ENCODE measurements at regions of chr14 and their contacts with region 1.

Region 1: GRCh38 chr14:80954687-80955299 is 628 bp upstream of the TSHR start:
- DNase-seq: peak; percentile 86
- H3K4me3 ChIP-seq: peak overlapping the region; percentile 21 to 55 (median 49)
- H3K27ac ChIP-seq: no peak overlapping the region
- H3K4me1 ChIP-seq: peaks cover 0 to 10% (median 8%) of the 10 kb centered on the region in 4 donors
- H3K27me3 ChIP-seq: peaks cover 0 to 7% (median 5%) of the 10 kb centered on the region in 3 donors
- CTCF ChIP-seq: peak; percentile 62 to 80 (median 71)
- EP300 ChIP-seq: no peak
- POLR2A ChIP-seq: no peak

Region 2: GRCh38 chr14:80987235-80988032 is 32.6 kb after region 1 on chr14:
- intact Hi-C with region 1: loop called (anchors 1 kb)
- DNase-seq: peak; percentile 70
- H3K4me3 ChIP-seq: no peak overlapping the region
- H3K27ac ChIP-seq: no peak overlapping the region
- H3K4me1 ChIP-seq: no peaks in the 10 kb centered on the region
- H3K27me3 ChIP-seq: peaks cover 0 to 16% (median 0%) of the 10 kb centered on the region in 3 donors
- CTCF ChIP-seq: peak; percentile 73 to 91 (median 88)
- EP300 ChIP-seq: no peak
- POLR2A ChIP-seq: no peak

Region 3: GRCh38 chr14:81170104-81170828 is 215.5 kb after region 1 on chr14:
- intact Hi-C with region 1: loop called (anchors 5 kb)
- DNase-seq: peak; percentile 97
- H3K4me3 ChIP-seq: peak overlapping the region; percentile 59 to 74 (median 68)
- H3K27ac ChIP-seq: peak overlapping the region; percentile 90 to 93 (median 92)
- H3K4me1 ChIP-seq: peaks cover 0 to 14% (median 9%) of the 10 kb centered on the region in 4 donors
- H3K27me3 ChIP-seq: no peaks in the 10 kb centered on the region
- CTCF ChIP-seq: peak; percentile 55 to 89 (median 85)
- EP300 ChIP-seq: no peak
- POLR2A ChIP-seq: peak; percentile 21 to 60

Region 4: GRCh38 chr14:81464247-81465002 is 509.6 kb after region 1 on chr14:
- intact Hi-C with region 1: loop called (anchors 10 kb)
- DNase-seq: no peak
- H3K4me3 ChIP-seq: peak overlapping the region; percentile 22 to 44 (median 42)
- H3K27ac ChIP-seq: peak overlapping the region in 3 of 4 donors; percentile 3 to 41 (median 27)
- H3K4me1 ChIP-seq: no peaks in the 10 kb centered on the region
- H3K27me3 ChIP-seq: no peaks in the 10 kb centered on the region
- CTCF ChIP-seq: peak; percentile 82 to 89 (median 85)
- EP300 ChIP-seq: no peak
- POLR2A ChIP-seq: no peak

Measured in sigmoid colon (tissue), 7 donors.